ENCODE measurements at regions of chr18 and their contacts with region 1.

Region 1: DNA sequence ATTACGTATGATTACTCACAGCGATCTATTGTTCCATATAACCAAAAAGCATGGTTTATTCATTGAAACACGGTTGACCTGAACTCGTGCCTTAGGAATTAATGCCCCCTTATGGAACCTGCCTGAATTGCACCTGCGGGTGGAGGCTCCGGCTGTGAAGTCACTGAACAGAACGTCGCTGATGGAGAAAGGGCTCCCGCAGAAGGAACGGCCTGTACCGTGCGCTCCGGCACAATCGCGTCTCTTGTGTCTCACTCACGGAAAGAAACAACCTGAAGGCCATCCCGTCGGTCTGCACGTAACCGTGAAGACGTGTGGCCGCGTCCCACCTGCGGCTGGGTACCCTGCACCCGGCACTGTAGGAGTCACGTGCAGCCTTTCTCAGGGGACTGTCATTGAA is 133.1 kb downstream of the NFATC1 start:
- DNase-seq: peak; percentile 40 to 80 (median 59)
- ATAC-seq: peak; percentile 61
- H3K4me3 ChIP-seq: no peak overlapping the region
- H3K4me1 ChIP-seq: no peaks in the 10 kb centered on the region
- CTCF ChIP-seq: peak; percentile 51

Region 2: GRCh38 chr18:79378542-79379250 is 150.2 kb before region 1 on chr18:
- intact Hi-C with region 1: loop called (anchors 5 kb)
- DNase-seq: peak; percentile 84 to 89 (median 85)
- ATAC-seq: peak; percentile 90
- H3K4me3 ChIP-seq: no peak overlapping the region
- H3K4me1 ChIP-seq: no peaks in the 10 kb centered on the region
- CTCF ChIP-seq: peak; percentile 95

Region 3: GRCh38 chr18:79951578-79952455 is 423.0 kb after region 1 on chr18 and contains the start of gene SLC66A2:
- intact Hi-C with region 1: no loop called
- DNase-seq: peak; percentile 95 to 99 (median 96)
- ATAC-seq: peak; percentile 83
- H3K4me3 ChIP-seq: peak within 1 kb of the TSS; percentile 68
- H3K4me1 ChIP-seq: peaks cover 52% of the 10 kb centered on the region
- CTCF ChIP-seq: no peak
- total RNA-seq, gene SLC66A2: 54.5 to 90.1 (median 68.6) TPM

Measured in mucosa of descending colon (tissue), 3 donors.